CD4-positive, alpha-beta T cell (primary cell): ENCODE measurements at regions of chr2 and their contacts with region 1.

Region 1: GRCh38 chr2:207248702-207249377 is 83.1 kb upstream of the KLF7 start:
- DNase-seq: no peak
- ATAC-seq: no peak
- H3K4me3 ChIP-seq: no peak overlapping the region
- H3K4me3 Mint-ChIP-seq: no peak overlapping the region
- H3K27ac ChIP-seq: no peak overlapping the region
- H3K27ac Mint-ChIP-seq: no peak overlapping the region
- H3K4me1 ChIP-seq: no peaks in the 10 kb centered on the region
- H3K4me1 Mint-ChIP-seq: no peaks in the 10 kb centered on the region
- H3K27me3 ChIP-seq: no peaks in the 10 kb centered on the region
- H3K27me3 Mint-ChIP-seq: no peaks in the 10 kb centered on the region
- CTCF ChIP-seq: no peak

Region 2: GRCh38 chr2:207015901-207016300 is 232.9 kb before region 1 on chr2:
- CTCF ChIA-PET with region 1: no interaction called
- POLR2A ChIA-PET with region 1: no interaction called
- intact Hi-C with region 1: no loop called
- DNase-seq: no peak
- ATAC-seq: no peak
- H3K4me3 ChIP-seq: no peak overlapping the region
- H3K4me3 Mint-ChIP-seq: no peak overlapping the region
- H3K27ac ChIP-seq: no peak overlapping the region
- H3K27ac Mint-ChIP-seq: no peak overlapping the region
- H3K4me1 ChIP-seq: no peaks in the 10 kb centered on the region
- H3K4me1 Mint-ChIP-seq: no peaks in the 10 kb centered on the region
- H3K27me3 ChIP-seq: no peaks in the 10 kb centered on the region
- H3K27me3 Mint-ChIP-seq: peaks cover 5% of the 10 kb centered on the region
- CTCF ChIP-seq: no peak

Region 3: DNA sequence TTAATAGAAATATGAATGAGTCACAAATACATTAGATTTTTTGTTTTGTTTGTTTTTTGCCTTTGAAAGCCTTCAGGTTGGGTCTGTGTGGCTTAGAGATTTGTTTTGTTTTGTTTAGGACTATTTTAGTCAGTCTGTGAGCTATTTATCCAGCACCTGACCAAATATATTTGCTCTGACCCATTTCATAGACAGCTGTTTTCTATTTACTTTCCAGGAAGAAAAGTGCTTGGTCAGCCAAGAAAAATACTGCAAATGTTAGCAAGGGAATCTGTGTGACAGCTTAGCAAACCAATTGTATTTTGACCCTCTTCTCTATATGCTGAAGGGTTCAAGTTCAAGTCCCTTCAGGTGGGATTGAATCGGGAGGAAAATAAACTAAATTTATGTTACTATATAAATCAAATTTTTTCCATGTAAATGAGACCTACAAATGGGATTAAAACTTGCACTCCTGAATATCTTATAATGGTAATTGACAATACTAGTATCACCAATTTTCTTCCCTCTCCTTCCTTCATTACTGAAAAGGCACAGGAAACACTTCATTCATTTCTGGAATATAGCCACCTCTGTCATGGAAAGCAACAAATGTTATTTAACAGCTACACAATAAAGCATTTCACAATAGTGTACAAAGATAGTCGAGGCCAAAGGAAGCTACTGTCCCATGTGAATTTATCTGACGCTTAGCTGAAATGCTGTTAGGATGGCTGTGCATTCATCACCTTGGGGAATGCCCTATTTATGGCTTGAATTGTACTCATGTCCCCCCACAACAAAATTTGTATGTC is 60.0 kb before region 1 on chr2:
- CTCF ChIA-PET with region 1: no interaction called
- POLR2A ChIA-PET with region 1: no interaction called
- intact Hi-C with region 1: loop called in 1 of 2 experiments (anchors 5 kb)
- DNase-seq: no peak
- ATAC-seq: no peak
- H3K4me3 ChIP-seq: no peak overlapping the region
- H3K4me3 Mint-ChIP-seq: no peak overlapping the region
- H3K27ac ChIP-seq: no peak overlapping the region
- H3K27ac Mint-ChIP-seq: no peak overlapping the region
- H3K4me1 ChIP-seq: no peaks in the 10 kb centered on the region
- H3K4me1 Mint-ChIP-seq: no peaks in the 10 kb centered on the region
- H3K27me3 ChIP-seq: no peaks in the 10 kb centered on the region
- H3K27me3 Mint-ChIP-seq: no peaks in the 10 kb centered on the region
- CTCF ChIP-seq: no peak

Region 4: GRCh38 chr2:207308519-207309224 is 59.8 kb after region 1 on chr2:
- CTCF ChIA-PET with region 1: no interaction called
- POLR2A ChIA-PET with region 1: no interaction called
- intact Hi-C with region 1: no loop called
- DNase-seq: peak in 1 of 14 experiments; percentile 22
- ATAC-seq: peak; percentile 24
- H3K4me3 ChIP-seq: no peak overlapping the region
- H3K4me3 Mint-ChIP-seq: no peak overlapping the region
- H3K27ac ChIP-seq: no peak overlapping the region
- H3K27ac Mint-ChIP-seq: no peak overlapping the region
- H3K4me1 ChIP-seq: peaks cover 9% of the 10 kb centered on the region
- H3K4me1 Mint-ChIP-seq: peaks cover 10% of the 10 kb centered on the region
- H3K27me3 ChIP-seq: no peaks in the 10 kb centered on the region
- H3K27me3 Mint-ChIP-seq: no peaks in the 10 kb centered on the region
- CTCF ChIP-seq: no peak

Region 5: GRCh38 chr2:207330912-207331311 is 82.1 kb after region 1 on chr2:
- CTCF ChIA-PET with region 1: no interaction called
- POLR2A ChIA-PET with region 1: no interaction called
- intact Hi-C with region 1: no loop called
- DNase-seq: peak in 1 of 14 experiments; percentile 33
- ATAC-seq: no peak
- H3K4me3 ChIP-seq: no peak overlapping the region
- H3K4me3 Mint-ChIP-seq: no peak overlapping the region
- H3K27ac ChIP-seq: no peak overlapping the region
- H3K27ac Mint-ChIP-seq: no peak overlapping the region
- H3K4me1 ChIP-seq: peaks cover 12% of the 10 kb centered on the region
- H3K4me1 Mint-ChIP-seq: peaks cover 11% of the 10 kb centered on the region
- H3K27me3 ChIP-seq: no peaks in the 10 kb centered on the region
- H3K27me3 Mint-ChIP-seq: no peaks in the 10 kb centered on the region
- CTCF ChIP-seq: no peak